ENCODE measurements at regions of chr16 and their contacts with region 1.

Region 1: DNA sequence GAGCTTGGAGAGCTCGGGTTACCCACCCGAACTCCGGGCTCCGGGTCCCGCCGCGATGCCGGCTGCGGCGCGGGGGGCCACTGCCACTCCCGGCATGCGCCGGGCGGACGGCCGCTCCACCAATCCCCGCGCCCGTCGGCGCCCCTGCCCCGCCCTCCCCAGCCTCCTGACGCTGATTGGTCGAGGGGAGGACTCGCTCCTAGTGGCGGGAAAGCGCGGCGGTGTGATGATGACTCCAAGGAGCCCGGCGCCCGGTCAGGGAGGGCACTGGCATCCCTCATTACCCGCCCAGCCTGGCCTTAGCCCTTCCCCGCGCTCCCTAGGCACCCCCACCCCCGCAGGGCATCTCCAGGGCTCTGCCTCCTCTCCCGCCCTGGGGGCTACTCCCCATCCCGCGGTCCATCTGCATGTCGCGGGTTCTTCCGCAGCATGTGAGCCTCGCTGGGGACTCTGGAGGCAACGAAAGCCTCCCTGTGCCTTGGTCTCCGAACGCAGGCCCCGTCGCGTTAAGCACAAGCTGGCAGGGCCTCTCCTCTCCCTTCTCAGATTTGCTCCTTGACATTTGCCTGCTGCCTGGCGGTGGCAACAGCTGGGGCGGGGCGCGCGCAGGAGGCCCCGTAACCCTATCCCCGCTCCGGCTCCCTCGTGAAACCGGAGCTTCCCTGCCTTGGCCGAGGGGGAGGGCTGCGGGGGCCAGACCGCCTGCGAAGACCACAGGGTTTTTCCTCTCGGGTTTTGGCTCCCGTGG is 1.7 kb downstream of the ATP2A1 start:
- DNase-seq: peak; percentile 83 to 86
- H3K4me3 ChIP-seq: peak overlapping the region; percentile 49 to 65
- H3K27ac ChIP-seq: peak overlapping the region in 1 of 2 donors; percentile 42
- H3K4me1 ChIP-seq: peaks cover 0 to 10% of the 10 kb centered on the region in 2 donors
- H3K27me3 ChIP-seq: no peaks in the 10 kb centered on the region
- CTCF ChIP-seq: peak in 3 of 4 experiments; percentile 18 to 33 (median 19)
- POLR2A ChIP-seq: peak in 1 of 2 donors; percentile 17

Region 2: GRCh38 chr16:28823872-28824716 is 55.9 kb before region 1 on chr16:
- intact Hi-C with region 1: no loop called
- DNase-seq: peak; percentile 97
- H3K4me3 ChIP-seq: peak overlapping the region; percentile 94 to 97
- H3K27ac ChIP-seq: peak overlapping the region; percentile 94 to 100
- H3K4me1 ChIP-seq: peaks cover 0 to 12% of the 10 kb centered on the region in 2 donors
- H3K27me3 ChIP-seq: no peaks in the 10 kb centered on the region
- CTCF ChIP-seq: peak; percentile 22 to 43 (median 32)
- POLR2A ChIP-seq: peak; percentile 53 to 60

Region 3: DNA sequence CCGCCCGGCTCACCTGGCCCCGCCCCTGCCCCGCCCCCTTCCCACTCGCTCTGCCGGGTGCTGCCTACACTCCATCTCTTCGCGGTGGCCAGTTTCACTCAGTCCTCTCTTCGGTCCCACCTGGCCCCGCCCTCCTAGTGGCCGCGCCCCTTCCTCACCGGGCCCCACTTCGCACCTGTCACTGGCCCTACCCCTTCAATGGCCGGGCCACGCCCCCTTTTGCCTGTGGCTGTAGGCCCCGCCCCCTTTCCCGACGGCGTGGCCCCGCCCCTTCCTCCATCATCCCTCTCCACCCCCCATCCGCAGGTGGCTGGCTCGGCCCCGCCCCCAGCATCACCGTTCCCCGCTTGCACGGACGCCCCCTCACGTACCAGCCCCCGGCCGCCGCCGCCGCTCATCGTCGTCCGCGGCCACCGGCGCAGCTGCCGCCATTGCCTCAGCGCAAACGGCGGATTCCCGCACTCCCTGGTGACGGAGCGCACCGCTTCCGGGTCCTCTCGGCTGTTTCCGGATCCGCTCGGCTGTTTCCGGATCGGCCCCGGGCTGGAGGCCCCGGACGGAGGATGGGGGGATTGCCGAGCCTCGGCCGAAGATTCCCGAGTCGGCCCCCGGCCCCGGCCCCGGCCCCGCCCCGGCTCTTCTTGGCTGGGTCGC is 44.8 kb after region 1 on chr16 and contains the start of gene RABEP2:
- intact Hi-C with region 1: loop called (anchors 10 kb)
- DNase-seq: peak; percentile 90 to 96
- H3K4me3 ChIP-seq: peak within 1 kb of the TSS; percentile 83 to 92
- H3K27ac ChIP-seq: peak within 1 kb of the TSS; percentile 89 to 91
- H3K4me1 ChIP-seq: peaks cover 0 to 7% of the 10 kb centered on the region in 2 donors
- H3K27me3 ChIP-seq: no peaks in the 10 kb centered on the region
- CTCF ChIP-seq: no peak
- POLR2A ChIP-seq: peak; percentile 42 to 44
- total RNA-seq, gene RABEP2: 4.9 to 41.1 (median 9.3) TPM